MCF 10A (cell line): ENCODE measurements at regions of chr7 and their contacts with region 1.

Region 1: GRCh38 chr7:23334482-23335056 is 35.4 kb downstream of the MALSU1 start:
- DNase-seq: peak; percentile 99
- H3K4me3 Mint-ChIP-seq: peak overlapping the region; percentile 25
- H3K27ac Mint-ChIP-seq: peak overlapping the region; percentile 61
- H3K4me1 Mint-ChIP-seq: peaks cover 33% of the 10 kb centered on the region
- H3K27me3 Mint-ChIP-seq: no peaks in the 10 kb centered on the region
- CTCF ChIP-seq: no peak

Region 2: DNA sequence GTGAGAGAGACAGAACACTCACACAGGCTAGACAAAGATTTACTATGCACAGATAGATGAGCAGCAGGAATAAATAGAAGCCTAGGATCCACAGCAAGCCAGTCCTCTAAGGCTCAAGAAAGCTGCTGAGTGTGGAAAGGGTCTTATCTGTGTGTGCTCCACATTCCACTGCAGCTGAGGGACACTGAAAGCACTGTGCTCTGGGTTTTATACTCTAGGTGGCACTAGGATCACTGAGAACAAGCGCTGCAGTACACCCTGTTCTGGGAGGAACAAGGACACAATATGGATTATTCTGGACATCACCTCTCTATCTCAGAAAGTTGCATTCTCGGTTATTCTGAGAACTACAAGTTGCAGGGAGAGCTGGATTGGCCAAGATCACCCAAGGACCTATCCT is 233.9 kb before region 1 on chr7:
- CTCF ChIA-PET with region 1: no interaction called
- POLR2A ChIA-PET with region 1: no interaction called
- intact Hi-C with region 1: no loop called
- DNase-seq: no peak
- H3K4me3 Mint-ChIP-seq: no peak overlapping the region
- H3K27ac Mint-ChIP-seq: no peak overlapping the region
- H3K4me1 Mint-ChIP-seq: no peaks in the 10 kb centered on the region
- H3K27me3 Mint-ChIP-seq: no peaks in the 10 kb centered on the region
- CTCF ChIP-seq: no peak

Region 3: GRCh38 chr7:23298885-23299769 is 35.4 kb before region 1 on chr7 and contains the start of gene MALSU1:
- CTCF ChIA-PET with region 1: interaction called, 3 read pairs
- POLR2A ChIA-PET with region 1: interaction called, 49 read pairs
- intact Hi-C with region 1: no loop called
- DNase-seq: peak; percentile 97
- H3K4me3 Mint-ChIP-seq: peak within 1 kb of the TSS; percentile 93
- H3K27ac Mint-ChIP-seq: peak within 1 kb of the TSS; percentile 71
- H3K4me1 Mint-ChIP-seq: peaks cover 23% of the 10 kb centered on the region
- H3K27me3 Mint-ChIP-seq: no peaks in the 10 kb centered on the region
- CTCF ChIP-seq: no peak
- total RNA-seq, gene MALSU1: 64.8 and 78.3 TPM in 2 replicates

Region 4: GRCh38 chr7:23315366-23315765 is 19.2 kb before region 1 on chr7:
- CTCF ChIA-PET with region 1: no interaction called
- POLR2A ChIA-PET with region 1: interaction called, 19 read pairs
- intact Hi-C with region 1: no loop called
- DNase-seq: peak; percentile 84
- H3K4me3 Mint-ChIP-seq: no peak overlapping the region
- H3K27ac Mint-ChIP-seq: no peak overlapping the region
- H3K4me1 Mint-ChIP-seq: peaks cover 6% of the 10 kb centered on the region
- H3K27me3 Mint-ChIP-seq: no peaks in the 10 kb centered on the region
- CTCF ChIP-seq: no peak

Region 5: GRCh38 chr7:23347682-23348180 is 13.2 kb after region 1 on chr7:
- CTCF ChIA-PET with region 1: interaction called, 4 read pairs
- POLR2A ChIA-PET with region 1: interaction called, 88 read pairs
- intact Hi-C with region 1: no loop called
- DNase-seq: peak; percentile 83
- H3K4me3 Mint-ChIP-seq: peak overlapping the region; percentile 68
- H3K27ac Mint-ChIP-seq: peak overlapping the region; percentile 90
- H3K4me1 Mint-ChIP-seq: peaks cover 28% of the 10 kb centered on the region
- H3K27me3 Mint-ChIP-seq: no peaks in the 10 kb centered on the region
- CTCF ChIP-seq: no peak

Region 6: DNA sequence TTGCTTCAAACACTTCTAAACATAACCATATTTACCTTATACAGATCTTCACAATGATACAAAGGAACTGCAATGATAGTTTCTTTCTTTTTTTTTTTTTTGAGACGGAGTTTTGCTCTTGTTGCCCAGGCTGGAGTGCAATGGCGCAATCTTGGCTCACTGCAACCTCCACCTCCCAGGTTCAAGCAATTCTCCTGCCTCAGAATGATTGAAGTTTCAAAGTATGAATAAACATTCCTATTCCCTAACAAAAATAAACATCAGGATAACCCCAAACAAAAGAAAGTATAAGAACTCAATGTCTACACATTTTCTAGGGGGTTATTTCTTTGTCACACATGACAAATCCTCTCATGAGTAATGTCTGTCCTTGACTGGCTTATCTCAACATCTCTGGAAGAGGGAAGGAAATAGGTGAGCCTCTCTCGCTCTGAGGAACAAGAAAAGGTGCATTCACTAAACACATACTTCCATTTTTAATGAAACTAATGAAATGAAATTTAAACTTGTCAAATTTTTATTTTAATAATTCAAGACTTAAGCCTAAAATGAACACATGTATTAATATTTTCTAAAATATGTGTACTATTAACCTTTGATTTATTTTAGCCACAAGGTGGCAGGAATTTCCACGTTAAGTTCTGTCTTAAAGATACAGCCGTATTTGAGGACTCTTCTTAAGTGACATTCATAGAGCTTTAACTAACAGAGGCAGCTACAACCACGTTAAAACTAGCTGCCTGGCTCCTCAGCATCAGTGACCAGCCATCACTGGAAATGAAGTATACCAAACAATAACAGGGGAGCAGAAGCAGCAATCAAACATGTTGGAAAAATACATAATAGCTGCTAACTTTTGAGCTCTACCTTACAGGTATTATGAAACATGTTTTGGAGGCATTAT is 22.9 kb after region 1 on chr7:
- CTCF ChIA-PET with region 1: no interaction called
- POLR2A ChIA-PET with region 1: interaction called, 10 read pairs
- intact Hi-C with region 1: loop called (anchors 1 kb)
- DNase-seq: peak; percentile 74
- H3K4me3 Mint-ChIP-seq: peak overlapping the region; percentile 41
- H3K27ac Mint-ChIP-seq: peak overlapping the region; percentile 35
- H3K4me1 Mint-ChIP-seq: peaks cover 14% of the 10 kb centered on the region
- H3K27me3 Mint-ChIP-seq: no peaks in the 10 kb centered on the region
- CTCF ChIP-seq: peak; percentile 52